Activated naive CD4-positive, alpha-beta T cell treated with anti-CD3 and anti-CD28 coated beads, Interleukin-2, amount 10 ng/mL, durations not matched to agents 7 days and 5 days (primary cell): ENCODE measurements at regions of chr6 and their contacts with region 1.

Region 1: GRCh38 chr6:6712258-6712999 is 123.9 kb downstream of the LY86 start:
- DNase-seq: no peak
- H3K4me3 Mint-ChIP-seq: no peak overlapping the region
- H3K27ac Mint-ChIP-seq: peak overlapping the region; percentile 37
- H3K4me1 Mint-ChIP-seq: peaks cover 44% of the 10 kb centered on the region
- H3K27me3 Mint-ChIP-seq: peaks cover 47% of the 10 kb centered on the region

Region 2: DNA sequence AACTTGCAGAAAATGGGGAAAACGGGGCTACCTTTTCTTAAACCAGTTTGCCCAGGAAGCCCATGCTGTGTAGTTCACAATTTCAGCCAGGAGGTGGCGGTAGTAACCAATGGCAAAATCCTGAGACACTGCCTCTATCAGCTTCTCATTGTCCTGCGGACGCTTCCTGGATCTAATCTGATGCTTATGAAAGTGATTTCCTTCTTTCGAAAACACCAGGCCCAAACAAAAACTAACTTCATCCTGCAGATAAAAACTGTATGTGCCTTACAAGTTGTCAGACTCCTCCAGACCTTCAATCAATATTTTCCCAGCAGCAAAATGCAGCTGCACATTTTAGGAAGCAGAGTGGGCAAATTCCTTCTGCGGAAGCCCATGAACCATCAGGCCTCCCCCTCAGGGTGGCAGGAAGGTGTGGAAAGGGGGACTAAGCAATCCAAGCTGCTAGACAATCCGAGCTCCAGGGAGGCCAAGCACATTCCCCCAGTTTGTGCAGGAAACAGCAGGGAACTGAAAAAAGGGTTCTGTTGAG is 35.5 kb before region 1 on chr6:
- CTCF ChIA-PET with region 1: interaction called, 10 read pairs
- DNase-seq: peak; percentile 91
- H3K4me3 Mint-ChIP-seq: no peak overlapping the region
- H3K27ac Mint-ChIP-seq: peak overlapping the region; percentile 84
- H3K4me1 Mint-ChIP-seq: peaks cover 57% of the 10 kb centered on the region
- H3K27me3 Mint-ChIP-seq: peaks cover 14% of the 10 kb centered on the region